Gastrocnemius medialis (tissue), 4 donors: ENCODE measurements at regions of chr1 and their contacts with region 1.

Region 1: GRCh38 chr1:84620720-84621313 is 46.6 kb upstream of the CTBS start:
- DNase-seq: peak; percentile 18 to 42
- ATAC-seq: peak; percentile 89 to 93
- H3K4me3 ChIP-seq: peak overlapping the region; percentile 59 to 79 (median 66)
- H3K27ac ChIP-seq: peak overlapping the region; percentile 16 to 43 (median 30)
- H3K4me1 ChIP-seq: peaks cover 0 to 4% of the 10 kb centered on the region in 2 donors
- H3K27me3 ChIP-seq: no peaks in the 10 kb centered on the region
- CTCF ChIP-seq: peak; percentile 60 to 96 (median 82)
- POLR2A ChIP-seq: no peak

Region 2: DNA sequence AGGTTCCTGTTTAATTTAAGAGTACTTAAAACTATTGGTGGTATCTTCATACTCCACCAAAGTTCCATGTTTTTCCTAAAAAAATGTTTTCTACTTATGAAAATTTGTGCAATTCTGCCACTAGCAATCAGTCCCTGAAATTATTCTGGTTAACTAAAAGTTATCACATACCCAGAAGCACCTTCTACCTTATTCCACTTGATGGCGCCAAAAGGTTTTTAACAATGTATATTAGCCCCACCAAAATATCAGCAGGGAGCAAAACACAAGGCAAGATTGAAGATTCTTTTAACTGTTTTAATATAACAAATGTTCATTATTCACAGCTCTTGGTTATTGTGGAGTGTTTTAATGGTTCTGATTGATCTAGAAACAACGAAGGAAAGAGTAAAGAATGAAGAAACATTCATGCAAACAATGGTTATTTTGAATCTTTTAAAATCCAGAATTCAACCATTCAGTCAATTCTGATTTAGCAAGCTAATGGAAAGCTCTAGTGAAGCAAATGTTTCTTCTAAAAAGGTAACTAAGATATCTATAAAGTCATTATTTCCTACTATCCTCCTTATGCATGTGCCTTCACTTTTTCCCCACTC is 689.1 kb before region 1 on chr1:
- in situ Hi-C with region 1: loop called in 1 of 4 experiments (anchors 25 kb)
- intact Hi-C with region 1: no loop called
- DNase-seq: no peak
- ATAC-seq: peak; percentile 61 to 88
- H3K4me3 ChIP-seq: no peak overlapping the region
- H3K27ac ChIP-seq: no peak overlapping the region
- H3K4me1 ChIP-seq: peaks cover 8 to 9% of the 10 kb centered on the region in 2 donors
- H3K27me3 ChIP-seq: no peaks in the 10 kb centered on the region
- CTCF ChIP-seq: peak in 4 of 5 experiments; percentile 58 to 78 (median 68)
- POLR2A ChIP-seq: no peak

Region 3: DNA sequence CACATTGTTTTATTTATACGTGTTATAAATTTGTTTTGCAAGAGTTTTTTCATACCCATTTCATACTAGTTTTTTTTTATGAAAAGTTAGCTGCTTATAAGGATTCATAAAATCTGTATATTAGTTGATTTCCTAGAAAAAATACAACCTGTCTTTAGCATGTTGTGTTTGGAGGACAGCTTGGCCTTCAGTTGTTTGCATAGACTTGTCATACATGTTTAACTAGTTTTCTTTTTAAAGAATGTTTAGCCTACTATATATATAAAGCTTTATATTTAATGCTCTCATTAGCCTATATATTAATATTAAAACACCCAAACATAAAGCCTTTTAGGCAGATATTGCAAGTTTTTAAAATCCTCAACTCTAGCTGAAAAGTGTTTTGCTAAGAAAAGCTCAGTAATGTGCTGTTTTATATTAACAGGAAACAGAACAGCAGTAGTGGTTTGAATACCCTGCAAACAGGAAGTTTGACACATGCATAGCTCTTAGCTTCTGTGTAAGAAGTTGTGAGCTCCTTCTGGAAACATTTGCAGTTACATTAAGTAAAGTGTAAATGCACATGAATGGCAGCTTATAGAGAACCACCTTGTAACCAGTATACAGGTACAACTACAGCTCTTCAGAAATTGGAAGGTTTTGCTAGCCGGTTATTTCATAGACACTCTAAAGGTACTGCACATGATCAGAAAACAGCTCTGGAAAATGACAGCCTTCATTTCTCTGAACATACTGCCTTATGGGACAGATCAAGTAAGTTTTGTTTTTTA is 476.8 kb before region 1 on chr1 and contains the start of gene PRKACB:
- in situ Hi-C with region 1: loop called in 3 of 4 experiments (anchors 25 kb)
- intact Hi-C with region 1: no loop called
- DNase-seq: no peak
- ATAC-seq: no peak
- H3K4me3 ChIP-seq: peak within 1 kb of the TSS in 1 of 4 donors; percentile 6
- H3K27ac ChIP-seq: no peak within 1 kb of the TSS
- H3K4me1 ChIP-seq: no peaks in the 10 kb centered on the region
- H3K27me3 ChIP-seq: no peaks in the 10 kb centered on the region
- CTCF ChIP-seq: no peak
- POLR2A ChIP-seq: peak in 1 of 2 donors; percentile 25
- total RNA-seq, gene PRKACB: 4.2 to 12.4 (median 7.0) TPM

Region 4: GRCh38 chr1:84442256-84442655 is 178.6 kb before region 1 on chr1:
- in situ Hi-C with region 1: no loop called
- intact Hi-C with region 1: loop called (anchors 1 kb)
- DNase-seq: no peak
- ATAC-seq: peak; percentile 24 to 52
- H3K4me3 ChIP-seq: no peak overlapping the region
- H3K27ac ChIP-seq: no peak overlapping the region
- H3K4me1 ChIP-seq: no peaks in the 10 kb centered on the region
- H3K27me3 ChIP-seq: no peaks in the 10 kb centered on the region
- CTCF ChIP-seq: peak; percentile 13 to 39 (median 25)
- POLR2A ChIP-seq: no peak

Region 5: GRCh38 chr1:84573967-84574842 is 46.6 kb before region 1 on chr1 and contains the start of gene CTBS:
- in situ Hi-C with region 1: no loop called
- intact Hi-C with region 1: loop called (anchors 5 kb)
- DNase-seq: peak; percentile 76 to 81
- ATAC-seq: peak; percentile 88 to 92
- H3K4me3 ChIP-seq: peak within 1 kb of the TSS; percentile 70 to 89 (median 88)
- H3K27ac ChIP-seq: peak within 1 kb of the TSS; percentile 91 to 97 (median 96)
- H3K4me1 ChIP-seq: peaks cover 14 to 22% of the 10 kb centered on the region in 2 donors
- H3K27me3 ChIP-seq: no peaks in the 10 kb centered on the region
- CTCF ChIP-seq: no peak
- POLR2A ChIP-seq: peak; percentile 72 to 78
- total RNA-seq, gene CTBS: 4.0 to 6.6 (median 4.7) TPM

Region 6: DNA sequence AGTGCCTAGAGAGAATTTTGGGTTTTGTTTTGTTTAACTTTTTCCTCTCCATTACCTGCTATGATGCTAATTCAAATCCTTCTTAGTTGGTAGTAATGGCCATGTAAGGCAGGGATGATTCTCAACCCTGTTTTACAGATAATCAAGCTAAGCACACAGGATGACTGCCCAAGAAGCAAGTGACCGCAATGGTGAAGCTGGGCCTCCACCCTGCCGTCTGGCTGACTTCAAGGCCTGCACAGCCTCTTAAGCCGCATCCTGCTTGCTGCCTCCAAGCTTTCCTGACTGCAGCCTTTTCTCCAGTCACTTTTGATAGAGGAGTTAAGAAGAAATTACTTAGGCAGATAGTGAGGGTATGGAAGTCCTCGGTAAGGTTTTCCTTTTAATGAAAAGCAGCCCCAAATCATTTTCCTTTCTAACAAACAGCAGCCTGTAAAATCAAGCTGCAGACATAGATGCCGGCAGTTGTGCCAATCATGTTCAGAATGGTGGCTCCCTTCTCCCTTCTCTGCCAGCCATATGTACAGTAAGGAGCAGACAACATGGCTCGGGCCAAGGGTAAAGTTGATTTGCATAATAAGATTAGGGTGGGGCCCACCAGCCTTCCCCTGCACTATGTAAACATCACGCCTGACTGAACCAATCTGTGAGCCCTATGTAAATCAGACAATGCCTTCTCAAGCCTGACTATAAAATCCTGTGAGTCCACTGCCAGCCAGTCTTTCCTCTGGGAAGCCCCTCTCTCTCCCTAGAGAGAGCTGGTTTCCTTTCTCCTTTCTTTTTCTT is 37.8 kb before region 1 on chr1:
- in situ Hi-C with region 1: no loop called
- intact Hi-C with region 1: loop called (anchors 2 kb)
- DNase-seq: no peak
- ATAC-seq: no peak
- H3K4me3 ChIP-seq: no peak overlapping the region
- H3K27ac ChIP-seq: peak overlapping the region in 1 of 4 donors; percentile 20
- H3K4me1 ChIP-seq: peaks cover 0 to 6% of the 10 kb centered on the region in 2 donors
- H3K27me3 ChIP-seq: no peaks in the 10 kb centered on the region
- CTCF ChIP-seq: no peak
- POLR2A ChIP-seq: no peak

Region 7: GRCh38 chr1:84689514-84690396 is 68.9 kb after region 1 on chr1:
- in situ Hi-C with region 1: no loop called
- intact Hi-C with region 1: no loop called
- DNase-seq: peak; percentile 11 to 31
- ATAC-seq: peak; percentile 40 to 61
- H3K4me3 ChIP-seq: peak overlapping the region; percentile 87 to 96 (median 89)
- H3K27ac ChIP-seq: peak overlapping the region; percentile 83 to 91 (median 86)
- H3K4me1 ChIP-seq: peaks cover 4 to 17% of the 10 kb centered on the region in 2 donors
- H3K27me3 ChIP-seq: no peaks in the 10 kb centered on the region
- CTCF ChIP-seq: peak in 2 of 5 experiments; percentile 23 to 37
- POLR2A ChIP-seq: no peak

Region 8: DNA sequence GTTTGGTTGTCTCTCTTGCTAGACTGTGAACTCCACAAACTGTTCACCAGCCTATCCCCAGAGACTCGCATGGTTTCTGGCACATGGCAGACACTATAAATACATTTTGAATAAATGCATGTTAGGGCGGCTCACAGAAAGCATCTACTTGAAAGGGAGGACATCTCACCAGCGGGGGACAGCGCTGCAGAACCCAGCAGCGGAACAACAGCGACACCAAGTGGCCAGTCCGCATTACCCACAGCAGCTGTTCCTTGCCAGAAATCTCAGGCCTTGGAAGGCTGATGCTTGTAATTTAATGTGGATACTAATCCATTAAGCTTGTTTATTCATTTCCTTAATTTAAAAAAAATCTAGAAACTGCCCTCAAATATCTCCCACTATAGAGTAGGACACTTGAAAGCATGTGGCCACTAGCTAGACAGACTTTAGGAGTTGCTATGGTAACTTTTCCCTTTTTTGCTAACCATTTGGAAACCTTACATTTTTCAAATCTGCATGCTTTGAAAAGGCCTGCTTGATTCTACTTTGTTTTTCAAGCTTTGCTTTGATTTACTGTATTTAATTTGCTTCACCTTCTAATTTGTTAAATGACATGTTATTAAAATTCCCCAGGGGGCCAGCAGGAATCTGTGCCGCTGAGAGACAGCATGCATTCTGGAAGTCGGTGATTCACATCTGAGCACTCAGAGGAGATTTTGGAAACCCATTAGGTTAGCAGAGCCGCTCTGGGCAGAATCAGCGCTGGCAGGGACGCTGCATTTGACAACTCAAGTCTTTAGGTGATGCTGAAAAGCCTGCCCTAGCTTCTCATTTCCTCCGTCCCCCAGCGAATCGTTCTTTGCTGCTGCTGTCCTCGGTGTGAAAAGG is 132.9 kb after region 1 on chr1:
- in situ Hi-C with region 1: no loop called
- intact Hi-C with region 1: loop called (anchors 10 kb)
- DNase-seq: peak; percentile 17 to 31
- ATAC-seq: peak; percentile 66 to 69
- H3K4me3 ChIP-seq: no peak overlapping the region
- H3K27ac ChIP-seq: no peak overlapping the region
- H3K4me1 ChIP-seq: no peaks in the 10 kb centered on the region
- H3K27me3 ChIP-seq: peaks cover 0 to 9% (median 3%) of the 10 kb centered on the region in 3 donors
- CTCF ChIP-seq: peak; percentile 62 to 88 (median 75)
- POLR2A ChIP-seq: no peak